Transverse colon (tissue), 4 donors: ENCODE measurements at regions of chr10 and their contacts with region 1.

Region 1: GRCh38 chr10:43078987-43079275 is 2.1 kb downstream of the RET start:
- DNase-seq: peak; percentile 13
- H3K4me3 ChIP-seq: no peak overlapping the region
- H3K27ac ChIP-seq: no peak overlapping the region
- H3K4me1 ChIP-seq: peaks cover 0 to 20% (median 17%) of the 10 kb centered on the region in 4 donors
- H3K27me3 ChIP-seq: peaks cover 50% of the 10 kb centered on the region
- CTCF ChIP-seq: peak; percentile 10 to 32 (median 24)
- EP300 ChIP-seq: no peak
- POLR2A ChIP-seq: no peak

Region 2: DNA sequence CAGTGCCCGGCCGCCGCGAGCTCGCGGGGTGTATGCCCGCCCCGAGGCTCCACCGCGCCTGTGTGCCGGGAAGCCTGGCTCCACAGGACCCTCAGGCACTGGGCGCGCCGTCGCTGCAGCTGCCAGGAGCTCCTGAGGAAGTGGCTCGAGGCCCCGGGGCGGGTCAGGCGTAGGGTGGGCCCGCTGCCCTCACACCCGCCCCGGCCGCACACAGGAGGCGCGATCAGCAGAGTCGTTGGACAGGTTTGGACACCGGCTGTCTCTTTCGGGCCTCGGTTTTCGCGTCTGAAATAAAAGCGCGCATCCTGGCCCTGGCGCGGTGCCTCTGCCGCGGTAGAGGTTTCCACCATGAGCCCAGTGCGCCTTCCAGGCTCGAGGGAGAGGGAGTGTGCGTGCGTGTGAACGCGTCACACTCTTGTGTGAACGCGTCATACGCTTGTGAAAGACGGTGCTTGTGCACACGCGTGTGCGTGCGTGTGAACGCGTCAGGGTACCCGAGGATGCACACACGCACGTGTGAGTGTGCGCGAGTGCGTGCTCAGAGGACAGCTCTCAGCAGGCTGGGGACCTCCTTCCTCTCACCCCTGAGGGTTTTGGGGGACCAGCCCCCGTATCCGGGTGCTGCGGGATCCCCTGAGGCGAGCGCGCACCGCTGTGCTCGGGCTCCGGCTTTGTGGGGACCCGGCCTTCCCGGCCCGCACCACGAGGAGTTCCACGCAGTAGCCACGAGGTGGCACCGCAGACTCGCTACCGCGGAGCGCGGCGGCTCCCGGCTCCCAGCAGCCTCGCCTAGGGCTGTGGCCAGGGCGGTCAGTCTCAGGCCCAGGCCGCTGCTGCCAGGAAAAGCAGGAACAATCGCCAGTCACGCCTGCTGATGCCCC is 212.6 kb before region 1 on chr10:
- in situ Hi-C with region 1: loop called in 1 of 4 experiments (anchors 25 kb)
- intact Hi-C with region 1: no loop called
- DNase-seq: peak; percentile 64
- H3K4me3 ChIP-seq: peak overlapping the region in 1 of 4 donors; percentile 28
- H3K27ac ChIP-seq: no peak overlapping the region
- H3K4me1 ChIP-seq: peaks cover 0 to 14% (median 6%) of the 10 kb centered on the region in 4 donors
- H3K27me3 ChIP-seq: peaks cover 39% of the 10 kb centered on the region
- CTCF ChIP-seq: peak; percentile 52 to 79 (median 66)
- EP300 ChIP-seq: no peak
- POLR2A ChIP-seq: no peak

Region 3: DNA sequence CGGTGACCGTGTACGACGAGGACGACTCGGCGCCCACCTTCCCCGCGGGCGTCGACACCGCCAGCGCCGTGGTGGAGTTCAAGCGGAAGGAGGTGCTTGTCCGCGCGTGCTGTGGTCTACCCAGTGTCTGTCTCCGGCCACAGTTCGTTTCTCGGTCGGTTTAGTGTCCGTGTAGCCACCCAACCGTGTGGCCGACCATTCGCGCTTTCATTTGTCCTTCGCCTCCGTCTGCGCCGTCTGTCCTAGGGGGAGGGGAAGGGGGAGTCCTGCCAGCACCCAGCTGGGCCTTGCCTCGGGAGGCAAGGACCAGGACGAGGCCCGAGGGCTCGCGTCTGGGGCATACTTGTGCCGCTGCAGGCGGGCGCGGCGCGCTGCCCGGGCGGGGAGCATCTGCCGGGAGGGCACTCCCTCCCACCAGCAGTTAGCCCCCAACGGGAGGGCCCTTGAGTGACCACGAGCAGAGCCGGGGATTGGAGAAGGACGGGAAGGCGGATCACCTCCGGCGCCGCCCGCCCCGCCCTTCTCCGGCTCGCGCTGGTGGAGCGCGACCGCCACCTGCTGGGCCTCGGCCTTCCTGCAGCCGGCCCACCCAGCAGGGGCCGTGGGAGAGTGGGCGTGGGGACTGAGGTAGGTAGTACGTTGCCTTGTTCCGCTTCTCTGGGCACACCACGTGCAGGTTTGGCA is 26.3 kb after region 1 on chr10:
- in situ Hi-C with region 1: no loop called
- intact Hi-C with region 1: no loop called
- DNase-seq: peak; percentile 75
- H3K4me3 ChIP-seq: peak overlapping the region; percentile 28 to 55 (median 42)
- H3K27ac ChIP-seq: no peak overlapping the region
- H3K4me1 ChIP-seq: peaks cover 0 to 14% (median 12%) of the 10 kb centered on the region in 4 donors
- H3K27me3 ChIP-seq: peaks cover 20% of the 10 kb centered on the region
- CTCF ChIP-seq: peak; percentile 95 to 100 (median 99)
- EP300 ChIP-seq: no peak
- POLR2A ChIP-seq: no peak